ENCODE measurements at regions of chr11 and their contacts with region 1.

Region 1: DNA sequence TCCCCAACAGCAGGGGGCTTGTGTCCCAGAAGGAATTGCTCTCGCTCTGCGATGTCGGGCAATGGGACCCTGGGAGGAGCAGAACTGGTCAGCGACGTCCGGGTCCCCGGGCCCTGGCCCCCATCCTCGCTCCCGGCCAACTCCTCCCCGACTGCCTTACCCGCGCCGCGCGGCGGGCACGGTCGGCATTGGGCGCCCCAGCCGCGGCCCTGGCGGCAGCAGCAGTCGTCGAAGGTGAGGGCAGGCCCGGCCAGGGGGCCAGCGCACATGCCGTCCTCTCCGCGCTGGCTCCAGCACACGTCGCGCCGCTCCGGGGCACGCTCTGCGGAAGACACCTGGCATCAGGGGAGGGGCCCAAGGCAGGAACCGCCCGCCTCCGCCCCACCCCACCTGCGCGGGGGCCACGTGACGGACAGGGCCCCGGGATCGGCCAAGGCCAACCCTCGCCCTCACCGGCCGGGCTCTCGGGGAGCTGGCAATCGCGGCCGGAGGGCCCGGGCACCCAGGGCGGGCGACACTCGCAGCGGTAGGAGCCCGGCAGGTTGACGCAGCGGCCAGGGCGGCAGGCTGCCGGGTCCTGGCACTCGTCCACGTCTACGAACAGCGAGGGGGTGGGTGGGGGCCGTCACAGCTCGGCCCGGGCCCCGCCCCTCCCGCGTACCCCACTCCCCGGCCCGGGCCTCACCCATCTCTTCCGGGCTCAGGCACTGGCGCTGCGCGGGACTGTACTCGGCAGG is 14.8 kb downstream of the SCYL1 start:
- DNase-seq: peak; percentile 83 to 95 (median 87)
- ATAC-seq: peak; percentile 65 to 79 (median 76)
- H3K4me3 ChIP-seq: peak overlapping the region; percentile 39 to 66 (median 47)
- H3K27ac ChIP-seq: peak overlapping the region; percentile 77 to 87 (median 80)
- H3K4me1 ChIP-seq: peaks cover 5 to 11% (median 7%) of the 10 kb centered on the region in 3 donors
- H3K27me3 ChIP-seq: no peaks in the 10 kb centered on the region
- CTCF ChIP-seq: peak in 3 of 4 donors; percentile 17 to 36 (median 22)

Region 2: GRCh38 chr11:65213322-65214211 is 326.2 kb before region 1 on chr11:
- intact Hi-C with region 1: loop called in 1 of 3 experiments (anchors 10 kb)
- DNase-seq: peak in 1 of 6 donors; percentile 49
- ATAC-seq: peak in 3 of 4 donors; percentile 4 to 23 (median 15)
- H3K4me3 ChIP-seq: no peak overlapping the region
- H3K27ac ChIP-seq: no peak overlapping the region
- H3K4me1 ChIP-seq: no peaks in the 10 kb centered on the region
- H3K27me3 ChIP-seq: no peaks in the 10 kb centered on the region
- CTCF ChIP-seq: no peak

Region 3: GRCh38 chr11:65588199-65589054 is 48.7 kb after region 1 on chr11:
- intact Hi-C with region 1: loop called in 1 of 3 experiments (anchors 10 kb)
- DNase-seq: peak in 4 of 6 donors; percentile 64 to 82 (median 70)
- ATAC-seq: peak; percentile 35 to 74 (median 69)
- H3K4me3 ChIP-seq: no peak overlapping the region
- H3K27ac ChIP-seq: no peak overlapping the region
- H3K4me1 ChIP-seq: no peaks in the 10 kb centered on the region
- H3K27me3 ChIP-seq: no peaks in the 10 kb centered on the region
- CTCF ChIP-seq: peak in 3 of 4 donors; percentile 14 to 50 (median 50)

Region 4: GRCh38 chr11:65672186-65672860 is 132.6 kb after region 1 on chr11:
- intact Hi-C with region 1: no loop called
- DNase-seq: no peak
- ATAC-seq: no peak
- H3K4me3 ChIP-seq: no peak overlapping the region
- H3K27ac ChIP-seq: no peak overlapping the region
- H3K4me1 ChIP-seq: no peaks in the 10 kb centered on the region
- H3K27me3 ChIP-seq: no peaks in the 10 kb centered on the region
- CTCF ChIP-seq: no peak